ENCODE measurements at regions of chr15 and their contacts with region 1.

Region 1: GRCh38 chr15:62306851-62307504 is 141.9 kb upstream of the C2CD4B start:
- DNase-seq: no peak
- H3K4me3 ChIP-seq: no peak overlapping the region
- H3K27ac ChIP-seq: no peak overlapping the region
- H3K4me1 ChIP-seq: no peaks in the 10 kb centered on the region
- H3K27me3 ChIP-seq: no peaks in the 10 kb centered on the region; a peak in 1 of 7 replicates
- CTCF ChIP-seq: peak; percentile 14 to 87 (median 68)
- EP300 ChIP-seq: no peak
- POLR2A ChIP-seq: no peak
- RAD21 ChIP-seq: peak; percentile 91 to 94

Region 2: DNA sequence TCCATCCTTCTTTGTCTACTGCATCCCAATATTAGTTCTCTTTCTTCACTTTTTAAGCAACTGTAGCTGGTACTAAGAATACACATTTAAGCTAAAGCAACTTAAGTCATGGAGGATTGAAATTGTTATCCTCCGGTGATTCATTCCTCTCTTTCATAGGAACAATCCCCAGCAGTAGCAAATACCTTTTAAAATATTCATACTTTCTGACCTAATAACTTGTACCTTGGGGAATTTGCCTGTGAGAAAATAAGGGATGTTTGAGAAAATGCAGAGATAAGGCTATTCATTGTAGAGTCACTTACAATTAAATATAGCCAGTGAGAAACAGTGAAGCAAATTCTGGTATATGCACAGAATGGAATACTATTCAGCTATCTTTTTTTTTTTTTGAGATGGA is 312.8 kb before region 1 on chr15:
- CTCF ChIA-PET with region 1: no interaction called
- POLR2A ChIA-PET with region 1: no interaction called
- DNase-seq: no peak
- H3K4me3 ChIP-seq: no peak overlapping the region
- H3K27ac ChIP-seq: no peak overlapping the region
- H3K4me1 ChIP-seq: no peaks in the 10 kb centered on the region
- H3K27me3 ChIP-seq: no peaks in the 10 kb centered on the region
- CTCF ChIP-seq: no peak
- EP300 ChIP-seq: no peak
- POLR2A ChIP-seq: no peak
- RAD21 ChIP-seq: no peak

Region 3: DNA sequence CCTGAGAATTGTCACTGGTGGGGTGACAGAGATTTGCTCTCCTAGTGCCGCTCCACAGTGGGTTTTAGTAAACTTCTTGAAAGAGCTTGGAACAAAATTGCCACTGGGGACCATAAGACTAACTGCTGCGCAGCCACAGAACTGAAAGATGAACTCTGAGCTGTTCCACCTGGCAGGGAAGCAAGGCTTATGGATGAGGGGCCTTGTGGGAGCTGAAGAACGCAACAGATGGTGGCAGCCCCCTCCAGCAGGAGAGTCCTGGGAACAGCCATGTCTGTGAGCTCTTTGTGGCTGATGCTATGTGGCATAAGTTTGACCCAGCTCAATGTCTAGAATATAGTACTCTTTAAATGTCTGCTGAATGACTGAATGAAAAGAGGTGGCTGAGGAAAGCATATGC is 75.1 kb before region 1 on chr15:
- CTCF ChIA-PET with region 1: interaction called, 10 read pairs
- POLR2A ChIA-PET with region 1: no interaction called
- DNase-seq: no peak
- H3K4me3 ChIP-seq: no peak overlapping the region
- H3K27ac ChIP-seq: no peak overlapping the region
- H3K4me1 ChIP-seq: 0 out of 7 replicates have a peak, but pooled peaks cover 0 to 3% (median under 1%) of the 10 kb centered on the region in 4 experiments
- H3K27me3 ChIP-seq: no peaks in the 10 kb centered on the region
- CTCF ChIP-seq: no peak
- EP300 ChIP-seq: no peak
- POLR2A ChIP-seq: no peak
- RAD21 ChIP-seq: no peak

Region 4: GRCh38 chr15:62254137-62254934 is 52.6 kb before region 1 on chr15:
- CTCF ChIA-PET with region 1: interaction called, 22 read pairs
- POLR2A ChIA-PET with region 1: interaction called, 3 read pairs
- DNase-seq: peak; percentile 34 to 92
- H3K4me3 ChIP-seq: no peak overlapping the region
- H3K27ac ChIP-seq: no peak overlapping the region
- H3K4me1 ChIP-seq: peaks cover 0 to 4% (median under 1%) of the 10 kb centered on the region in 4 experiments; a peak in 1 of 7 replicates
- H3K27me3 ChIP-seq: no peaks in the 10 kb centered on the region
- CTCF ChIP-seq: peak; percentile 69 to 81 (median 75)
- EP300 ChIP-seq: no peak
- POLR2A ChIP-seq: no peak
- RAD21 ChIP-seq: peak; percentile 66 to 78

Region 5: GRCh38 chr15:62296756-62297507 is 10.0 kb before region 1 on chr15:
- CTCF ChIA-PET with region 1: interaction called, 17 read pairs
- POLR2A ChIA-PET with region 1: interaction called, 3 read pairs
- DNase-seq: no peak
- H3K4me3 ChIP-seq: no peak overlapping the region
- H3K27ac ChIP-seq: no peak overlapping the region
- H3K4me1 ChIP-seq: peaks cover 4 to 25% (median 15%) of the 10 kb centered on the region in 4 experiments; a peak in 6 of 7 replicates
- H3K27me3 ChIP-seq: no peaks in the 10 kb centered on the region
- CTCF ChIP-seq: peak in 1 of 3 experiments; percentile 9; a peak in 1 of 4 replicates
- EP300 ChIP-seq: no peak
- POLR2A ChIP-seq: no peak
- RAD21 ChIP-seq: peak; percentile 5 to 17; a peak in 2 of 4 replicates

Region 6: GRCh38 chr15:62344806-62345539 is 38.0 kb after region 1 on chr15:
- CTCF ChIA-PET with region 1: interaction called, 12 read pairs
- POLR2A ChIA-PET with region 1: no interaction called
- DNase-seq: peak; percentile 60 to 75
- H3K4me3 ChIP-seq: peak overlapping the region in 1 of 4 experiments; percentile 41; a peak in 1 of 8 replicates
- H3K27ac ChIP-seq: no peak overlapping the region
- H3K4me1 ChIP-seq: no peaks in the 10 kb centered on the region
- H3K27me3 ChIP-seq: no peaks in the 10 kb centered on the region
- CTCF ChIP-seq: peak; percentile 75 to 93 (median 80)
- EP300 ChIP-seq: no peak
- POLR2A ChIP-seq: no peak
- RAD21 ChIP-seq: peak; percentile 72 to 85

Measured in H1 (cell line).